Common myeloid progenitor, CD34-positive (primary cell): ENCODE measurements at regions of chr11 and their contacts with region 1.

Region 1: DNA sequence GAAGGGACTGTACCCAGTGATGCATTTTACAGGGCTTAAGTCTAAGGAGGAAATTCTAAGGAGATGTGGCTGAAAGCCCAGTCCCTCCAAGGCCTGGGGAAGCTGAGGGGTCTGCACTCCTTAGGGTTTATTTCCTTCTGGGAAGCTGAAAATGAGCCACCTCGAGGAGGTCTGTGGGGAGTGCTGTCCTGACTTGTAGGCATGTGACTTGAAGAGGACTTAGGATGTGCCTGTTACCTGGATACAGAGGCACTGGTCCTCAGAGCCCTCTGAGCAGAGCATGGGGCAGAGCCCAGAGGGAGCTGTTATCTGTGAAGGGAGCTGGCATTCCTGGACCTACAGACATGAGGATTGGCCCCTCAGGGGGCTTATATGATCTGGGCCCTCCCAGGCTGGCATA is 77.1 kb downstream of the TP53I11 start:
- DNase-seq: no peak
- H3K4me3 ChIP-seq: no peak overlapping the region
- H3K27ac ChIP-seq: no peak overlapping the region
- H3K4me1 ChIP-seq: no peaks in the 10 kb centered on the region
- H3K27me3 ChIP-seq: peaks cover 0 to 8% (median 2%) of the 10 kb centered on the region in 5 experiments

Region 2: GRCh38 chr11:44886790-44887140 is 13.2 kb after region 1 on chr11:
- CTCF ChIA-PET with region 1: interaction called, 12 read pairs
- POLR2A ChIA-PET with region 1: no interaction called
- DNase-seq: no peak
- H3K4me3 ChIP-seq: no peak overlapping the region
- H3K27ac ChIP-seq: no peak overlapping the region
- H3K4me1 ChIP-seq: no peaks in the 10 kb centered on the region
- H3K27me3 ChIP-seq: peaks cover 0 to 10% (median 4%) of the 10 kb centered on the region in 5 experiments